Activated T-helper 2 cell treated with anti-CD3 and anti-CD28 coated beads, Interferon-gamma antibody, Interleukin-2, Interleukin-4, amounts not matched to agents 10 μg/mL and 5 μg/mL and 100 μg/mL, durations not matched to agents 14 hours and 24 hours and 36 hours (primary cell): ENCODE measurements at regions of chr1 and their contacts with region 1.

Region 1: GRCh38 chr1:115706587-115707425 is 61.7 kb downstream of the CASQ2 start:
- DNase-seq: no peak
- H3K4me3 Mint-ChIP-seq: no peak overlapping the region
- H3K27ac Mint-ChIP-seq: no peak overlapping the region
- H3K4me1 Mint-ChIP-seq: peaks cover 6% of the 10 kb centered on the region
- H3K27me3 Mint-ChIP-seq: peaks cover 20% of the 10 kb centered on the region

Region 2: DNA sequence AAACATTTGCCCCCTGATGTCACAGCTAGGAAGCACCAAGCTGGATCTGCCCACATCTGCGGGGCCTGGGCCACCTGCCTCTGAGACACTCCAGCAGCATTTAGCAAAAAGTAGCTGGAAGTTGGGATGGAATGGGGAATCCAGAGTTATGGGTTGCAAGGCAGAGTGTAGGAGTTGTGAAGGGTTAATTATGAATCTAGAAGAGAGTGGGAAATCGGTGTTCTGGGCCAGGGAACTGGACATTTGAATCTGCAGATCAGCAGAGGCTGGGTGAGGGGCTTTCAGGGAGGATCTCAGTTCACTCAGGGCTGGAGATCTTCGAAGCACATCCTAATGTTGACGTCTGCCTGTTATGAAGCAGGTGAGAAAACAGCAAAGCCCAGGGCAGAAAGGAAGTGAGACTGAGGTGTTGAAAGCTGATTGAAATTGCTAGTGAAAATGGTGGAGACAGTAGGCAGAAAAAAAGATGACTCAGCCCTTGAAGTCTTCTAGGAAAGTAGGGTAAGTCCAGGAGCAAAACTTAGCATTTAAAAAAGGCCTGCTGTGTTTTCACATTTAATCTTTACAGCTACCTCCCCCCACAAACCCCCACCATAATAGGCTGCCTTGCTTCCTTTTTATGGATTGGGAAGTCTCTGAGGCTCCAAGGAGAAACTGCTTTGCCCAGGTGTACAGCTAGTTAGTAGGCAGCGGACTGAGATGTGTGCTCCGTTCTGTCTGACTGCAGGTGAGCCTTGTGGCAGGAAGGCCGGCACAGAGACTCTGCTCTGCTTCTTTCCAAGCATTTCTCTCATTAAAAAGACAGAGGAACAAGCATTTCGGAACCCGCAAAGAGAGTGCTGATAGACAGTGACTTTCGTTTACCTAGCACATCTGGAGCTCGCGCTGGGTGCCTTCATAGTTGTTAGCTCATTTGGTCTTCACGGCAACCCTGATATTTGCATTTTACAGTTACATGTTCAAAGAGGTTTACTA is 57.8 kb before region 1 on chr1:
- intact Hi-C with region 1: loop called (anchors 2 kb)
- DNase-seq: peak; percentile 24
- H3K4me3 Mint-ChIP-seq: no peak overlapping the region
- H3K27ac Mint-ChIP-seq: no peak overlapping the region
- H3K4me1 Mint-ChIP-seq: peaks cover 12% of the 10 kb centered on the region
- H3K27me3 Mint-ChIP-seq: peaks cover 2% of the 10 kb centered on the region

Region 3: DNA sequence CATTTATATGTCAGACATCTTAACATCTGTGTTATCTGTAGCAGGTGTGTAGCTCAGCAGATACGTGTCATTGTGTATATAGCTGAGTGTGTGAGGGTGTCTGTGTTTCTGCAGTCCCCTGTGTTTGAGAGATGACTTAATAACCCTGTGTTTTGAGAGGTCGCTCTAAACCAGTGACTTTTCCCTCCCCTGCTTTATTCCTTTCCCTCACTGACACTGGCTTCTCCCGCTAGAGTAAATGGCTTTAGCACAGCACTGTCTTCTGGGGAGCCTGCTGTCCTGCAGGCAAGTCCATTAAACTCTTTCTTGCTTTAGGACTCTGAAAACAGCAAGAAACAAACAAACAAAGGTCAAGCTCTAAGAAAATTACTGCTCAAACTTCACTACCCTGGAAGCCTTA is 12.0 kb before region 1 on chr1:
- intact Hi-C with region 1: no loop called
- DNase-seq: no peak
- H3K4me3 Mint-ChIP-seq: no peak overlapping the region
- H3K27ac Mint-ChIP-seq: no peak overlapping the region
- H3K4me1 Mint-ChIP-seq: no peaks in the 10 kb centered on the region
- H3K27me3 Mint-ChIP-seq: peaks cover 15% of the 10 kb centered on the region